ENCODE measurements at regions of chr9 and their contacts with region 1.

Region 1: GRCh38 chr9:33101108-33101951 is 24.9 kb upstream of the SMU1 start:
- DNase-seq: no peak

Region 2: GRCh38 chr9:33130508-33130911 is 29.2 kb after region 1 on chr9:
- intact Hi-C with region 1: no loop called
- DNase-seq: no peak

Region 3: GRCh38 chr9:33159760-33160127 is 58.4 kb after region 1 on chr9:
- intact Hi-C with region 1: loop called (anchors 5 kb)
- DNase-seq: no peak

Region 4: DNA sequence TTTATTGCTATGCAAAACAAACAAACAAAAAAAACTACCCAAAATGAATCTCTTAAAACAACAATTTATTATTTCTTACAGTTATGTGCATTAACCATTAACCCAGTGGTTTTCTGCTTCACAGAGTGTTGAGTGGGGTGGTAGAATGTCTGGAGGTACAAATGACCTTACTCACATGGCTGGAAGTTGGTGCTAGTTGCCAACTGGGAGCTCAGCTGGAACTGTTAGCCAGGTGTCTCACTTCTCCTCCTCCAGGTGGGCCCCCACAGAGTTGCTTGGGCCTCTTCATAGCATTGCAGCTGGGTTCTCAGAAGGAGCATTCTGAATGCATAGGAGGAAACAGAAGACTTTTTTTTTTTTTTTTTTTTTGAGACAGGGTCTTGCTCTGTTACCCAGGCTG is 76.3 kb after region 1 on chr9:
- intact Hi-C with region 1: no loop called
- DNase-seq: no peak

Measured in cardiac septum (tissue), 1 donor.